HCT116 (cell line): ENCODE measurements at regions of chr2 and their contacts with region 1.

Region 1: GRCh38 chr2:143162123-143162837 is 33.1 kb downstream of the ARHGAP15 start:
- DNase-seq: peak; percentile 56
- ATAC-seq: peak; percentile 98
- H3K4me3 ChIP-seq: no peak overlapping the region
- H3K27ac ChIP-seq: no peak overlapping the region
- H3K4me1 ChIP-seq: no peaks in the 10 kb centered on the region
- H3K27me3 ChIP-seq: peaks cover 63% of the 10 kb centered on the region
- CTCF ChIP-seq: peak; percentile 56 to 72 (median 72); a peak in 5 of 6 replicates
- POLR2A ChIP-seq: no peak
- RAD21 ChIP-seq: peak; percentile 65

Region 2: GRCh38 chr2:143193121-143193520 is 30.8 kb after region 1 on chr2:
- CTCF ChIA-PET with region 1: no interaction called
- POLR2A ChIA-PET with region 1: no interaction called
- RAD21 ChIA-PET with region 1: no interaction called
- intact Hi-C with region 1: no loop called
- DNase-seq: no peak
- ATAC-seq: no peak
- H3K4me3 ChIP-seq: no peak overlapping the region
- H3K27ac ChIP-seq: no peak overlapping the region
- H3K4me1 ChIP-seq: no peaks in the 10 kb centered on the region
- H3K27me3 ChIP-seq: 0 out of 2 replicates have a peak, but pooled peaks cover 7% of the 10 kb centered on the region
- CTCF ChIP-seq: no peak
- POLR2A ChIP-seq: no peak
- RAD21 ChIP-seq: no peak

Region 3: GRCh38 chr2:143217512-143218115 is 55.3 kb after region 1 on chr2:
- CTCF ChIA-PET with region 1: interaction called, 21 read pairs
- POLR2A ChIA-PET with region 1: no interaction called
- RAD21 ChIA-PET with region 1: interaction called in 1 of 2 experiments, 3 read pairs
- intact Hi-C with region 1: loop called (anchors 2 kb)
- DNase-seq: no peak
- ATAC-seq: no peak
- H3K4me3 ChIP-seq: no peak overlapping the region
- H3K27ac ChIP-seq: no peak overlapping the region
- H3K4me1 ChIP-seq: no peaks in the 10 kb centered on the region
- H3K27me3 ChIP-seq: no peaks in the 10 kb centered on the region
- CTCF ChIP-seq: no peak
- POLR2A ChIP-seq: no peak
- RAD21 ChIP-seq: no peak

Region 4: GRCh38 chr2:143223556-143223955 is 61.3 kb after region 1 on chr2:
- CTCF ChIA-PET with region 1: interaction called, 21 read pairs
- POLR2A ChIA-PET with region 1: no interaction called
- RAD21 ChIA-PET with region 1: interaction called in 1 of 2 experiments, 3 read pairs
- intact Hi-C with region 1: loop called (anchors 2 kb)
- DNase-seq: no peak
- ATAC-seq: no peak
- H3K4me3 ChIP-seq: no peak overlapping the region
- H3K27ac ChIP-seq: no peak overlapping the region
- H3K4me1 ChIP-seq: no peaks in the 10 kb centered on the region
- H3K27me3 ChIP-seq: peaks cover 5% of the 10 kb centered on the region; the same call in 1 of the 2 replicates
- CTCF ChIP-seq: no peak
- POLR2A ChIP-seq: no peak
- RAD21 ChIP-seq: no peak